ENCODE measurements at regions of chr5 and their contacts with region 1.

Region 1: DNA sequence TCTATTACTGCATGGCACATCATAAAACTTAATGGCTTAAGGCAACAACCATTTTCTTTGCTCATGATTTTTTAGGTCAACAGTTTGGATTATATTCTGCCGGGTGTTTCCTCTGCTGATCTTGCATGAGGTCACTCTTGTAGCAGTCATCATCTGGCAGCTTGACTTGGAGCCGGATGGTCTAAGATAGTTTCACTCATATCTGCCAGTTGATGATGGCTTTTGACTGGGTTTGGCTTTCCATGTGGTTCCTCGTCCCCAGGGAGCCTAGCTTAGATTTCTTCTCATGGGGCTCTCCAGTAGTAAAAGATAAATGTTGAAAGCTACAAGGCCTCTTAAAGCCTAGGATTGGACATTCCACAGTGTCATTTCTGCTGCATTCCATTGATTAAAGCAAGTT is 27.4 kb downstream of the LNPEP start:
- DNase-seq: peak; percentile 68
- H3K4me3 Mint-ChIP-seq: peak overlapping the region; percentile 79
- H3K27ac Mint-ChIP-seq: peak overlapping the region; percentile 92
- H3K4me1 Mint-ChIP-seq: peaks cover 58% of the 10 kb centered on the region
- H3K27me3 Mint-ChIP-seq: no peaks in the 10 kb centered on the region

Region 2: GRCh38 chr5:96952118-96952750 is 11.0 kb before region 1 on chr5:
- intact Hi-C with region 1: loop called (anchors 2 kb)
- DNase-seq: peak; percentile 32
- H3K4me3 Mint-ChIP-seq: no peak overlapping the region
- H3K27ac Mint-ChIP-seq: no peak overlapping the region
- H3K4me1 Mint-ChIP-seq: peaks cover 47% of the 10 kb centered on the region
- H3K27me3 Mint-ChIP-seq: no peaks in the 10 kb centered on the region

Region 3: DNA sequence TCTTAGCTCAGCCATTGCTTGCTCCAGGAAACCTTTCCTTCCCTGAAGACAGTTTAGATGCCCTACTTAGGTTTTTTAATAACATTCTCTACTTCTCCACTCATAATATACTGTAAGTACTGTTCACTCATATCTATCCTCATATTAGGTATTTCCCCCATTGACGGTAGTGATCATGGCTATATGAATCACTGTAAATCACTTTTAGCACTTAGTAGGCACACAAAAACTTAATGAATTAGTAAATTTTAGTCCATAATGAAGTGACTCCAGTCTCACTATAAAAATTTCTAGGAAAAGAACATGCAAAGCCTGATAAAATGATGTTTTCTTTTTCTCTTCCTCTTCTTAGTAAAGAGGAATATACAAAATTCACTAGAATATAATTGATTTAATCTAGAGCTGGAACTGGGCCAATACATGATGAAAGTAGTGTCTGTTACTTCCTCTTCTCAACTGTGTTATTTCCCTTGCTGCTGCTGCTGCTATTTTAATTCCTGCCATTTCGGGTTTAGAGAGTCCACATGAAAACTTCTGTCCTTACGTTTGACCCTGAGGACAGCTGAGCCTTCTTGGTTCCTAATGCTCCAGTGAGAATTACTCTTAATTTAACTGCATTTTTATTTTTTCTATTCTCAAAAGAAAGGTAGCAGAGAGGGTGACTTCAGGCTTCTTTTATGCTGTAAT is 46.1 kb after region 1 on chr5:
- intact Hi-C with region 1: loop called (anchors 5 kb)
- DNase-seq: no peak
- H3K4me3 Mint-ChIP-seq: no peak overlapping the region
- H3K27ac Mint-ChIP-seq: peak overlapping the region; percentile 14
- H3K4me1 Mint-ChIP-seq: peaks cover 13% of the 10 kb centered on the region
- H3K27me3 Mint-ChIP-seq: no peaks in the 10 kb centered on the region